ENCODE measurements at regions of chr18 and their contacts with region 1.

Region 1: DNA sequence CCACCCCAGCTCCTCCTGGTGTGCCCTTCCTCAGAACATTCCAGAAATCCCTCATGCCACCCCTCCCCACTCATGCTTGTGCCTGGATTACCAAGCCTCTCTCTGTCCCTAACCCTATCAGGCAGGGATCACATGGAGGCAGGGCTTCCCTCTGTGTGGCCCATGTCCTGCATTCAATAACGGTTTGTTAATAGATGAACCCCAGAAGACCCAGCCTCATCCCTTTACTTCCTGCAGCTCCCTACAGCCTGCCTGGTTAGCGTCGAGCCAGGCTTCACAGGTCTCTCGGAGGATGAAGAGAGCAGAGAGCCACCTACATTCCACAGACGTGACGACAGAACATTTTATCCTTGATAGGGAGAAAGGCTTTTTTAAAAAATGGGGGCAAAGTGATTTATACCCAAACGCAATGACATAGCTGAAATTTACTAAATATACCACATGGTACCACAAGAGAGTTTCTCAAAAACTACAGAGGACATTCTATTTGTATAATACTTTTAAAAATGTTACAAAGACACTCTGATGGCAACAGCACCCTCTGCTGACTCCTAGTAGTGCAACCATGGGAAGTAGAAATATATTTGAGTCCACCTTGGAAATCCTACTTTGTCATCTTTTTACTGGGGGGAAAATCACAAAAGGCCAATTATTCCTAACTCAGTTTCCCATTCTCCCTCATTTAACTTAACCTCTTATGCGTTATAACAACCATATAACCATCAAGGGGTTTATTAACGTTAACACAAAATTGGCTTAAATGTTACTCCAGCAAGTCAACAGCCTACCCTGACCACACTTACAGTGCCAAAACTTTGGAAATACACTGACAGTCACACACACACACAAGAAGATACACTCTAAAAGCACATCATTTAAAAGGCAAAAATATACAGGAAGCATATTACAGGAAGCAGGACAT is 30.7 kb downstream of the FBXO15 start:
- DNase-seq: peak; percentile 26
- H3K4me3 ChIP-seq: no peak overlapping the region
- H3K27ac ChIP-seq: peak overlapping the region; percentile 22
- H3K27me3 ChIP-seq: no peaks in the 10 kb centered on the region
- CTCF ChIP-seq: peak; percentile 84

Region 2: GRCh38 chr18:73848656-73849055 is 268.2 kb before region 1 on chr18:
- CTCF ChIA-PET with region 1: interaction called, 10 read pairs
- POLR2A ChIA-PET with region 1: no interaction called
- DNase-seq: peak; percentile 49
- H3K4me3 ChIP-seq: no peak overlapping the region
- H3K27ac ChIP-seq: peak overlapping the region; percentile 42
- H3K27me3 ChIP-seq: no peaks in the 10 kb centered on the region
- CTCF ChIP-seq: no peak

Region 3: GRCh38 chr18:74360852-74361655 is 244.2 kb after region 1 on chr18:
- CTCF ChIA-PET with region 1: no interaction called
- POLR2A ChIA-PET with region 1: no interaction called
- DNase-seq: no peak
- H3K4me3 ChIP-seq: no peak overlapping the region
- H3K27ac ChIP-seq: no peak overlapping the region
- H3K27me3 ChIP-seq: peaks cover 2% of the 10 kb centered on the region
- CTCF ChIP-seq: no peak

Region 4: GRCh38 chr18:74506425-74507119 is 389.7 kb after region 1 on chr18:
- CTCF ChIA-PET with region 1: no interaction called
- POLR2A ChIA-PET with region 1: no interaction called
- DNase-seq: peak; percentile 4
- H3K4me3 ChIP-seq: no peak overlapping the region
- H3K27ac ChIP-seq: no peak overlapping the region
- H3K27me3 ChIP-seq: no peaks in the 10 kb centered on the region
- CTCF ChIP-seq: no peak